Esophagus muscularis mucosa (tissue), 4 donors: ENCODE measurements at regions of chr4 and their contacts with region 1.

Region 1: DNA sequence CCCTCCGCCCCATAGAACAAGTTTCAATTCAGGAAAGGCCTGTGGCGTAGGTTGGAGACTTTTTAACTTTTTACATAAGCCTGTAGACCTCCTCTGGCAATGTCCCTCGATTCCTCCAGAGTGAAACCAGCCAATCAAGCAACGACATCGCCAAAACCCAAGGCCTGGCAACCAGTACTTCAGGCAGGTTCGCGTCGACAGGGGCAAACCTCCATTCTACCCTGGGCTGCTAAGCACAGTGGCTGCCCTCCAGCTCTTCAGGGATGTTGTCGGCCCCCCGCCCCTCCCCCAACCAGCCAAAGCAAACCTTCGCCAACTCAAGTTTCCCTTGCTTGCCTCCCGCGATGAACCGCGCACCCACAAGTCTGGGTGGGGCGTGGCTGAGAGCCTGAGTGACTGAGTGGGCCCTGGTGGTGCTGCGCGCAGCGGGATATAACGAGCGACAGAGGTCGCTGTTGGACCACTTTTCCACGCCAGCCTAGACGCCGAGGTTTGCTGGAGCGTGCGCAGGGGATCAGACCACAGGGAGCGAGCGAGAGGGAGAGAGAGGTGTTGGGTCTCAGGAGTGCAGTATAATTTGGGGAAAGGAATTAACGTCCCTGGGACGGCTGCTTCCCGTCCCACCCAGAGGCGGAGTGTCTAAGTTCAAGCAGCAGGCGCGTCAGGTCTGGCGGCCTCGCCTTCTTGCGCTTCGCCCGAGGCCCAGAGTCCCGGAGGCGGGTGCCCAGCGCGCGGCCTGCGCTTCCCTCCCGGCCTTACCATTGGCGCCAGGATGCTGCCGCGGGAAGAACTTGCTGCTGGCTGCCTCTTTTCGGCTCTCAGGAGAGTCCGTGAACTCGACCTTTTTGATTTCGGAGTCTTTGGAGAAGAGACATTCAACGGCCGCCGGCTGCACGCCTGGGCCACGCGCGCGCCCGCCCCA is 9.0 kb upstream of the PITX2 start:
- DNase-seq: no peak
- H3K4me3 ChIP-seq: peak overlapping the region; percentile 41 to 62 (median 48)
- H3K27ac ChIP-seq: peak overlapping the region; percentile 87 to 91 (median 90)
- H3K4me1 ChIP-seq: peaks cover 23 to 40% (median 32%) of the 10 kb centered on the region in 4 donors
- H3K27me3 ChIP-seq: peaks cover 0 to 84% (median 13%) of the 10 kb centered on the region in 4 donors
- CTCF ChIP-seq: peak; percentile 78 to 84 (median 80)
- EP300 ChIP-seq: no peak
- POLR2A ChIP-seq: no peak

Region 2: GRCh38 chr4:110710070-110710469 is 78.2 kb after region 1 on chr4:
- intact Hi-C with region 1: no loop called
- DNase-seq: no peak
- H3K4me3 ChIP-seq: no peak overlapping the region
- H3K27ac ChIP-seq: no peak overlapping the region
- H3K4me1 ChIP-seq: no peaks in the 10 kb centered on the region
- H3K27me3 ChIP-seq: no peaks in the 10 kb centered on the region
- CTCF ChIP-seq: no peak
- EP300 ChIP-seq: no peak
- POLR2A ChIP-seq: no peak

Region 3: GRCh38 chr4:110970642-110971041 is 338.8 kb after region 1 on chr4:
- intact Hi-C with region 1: loop called (anchors 5 kb)
- DNase-seq: no peak
- H3K4me3 ChIP-seq: no peak overlapping the region
- H3K27ac ChIP-seq: no peak overlapping the region
- H3K4me1 ChIP-seq: no peaks in the 10 kb centered on the region
- H3K27me3 ChIP-seq: no peaks in the 10 kb centered on the region
- CTCF ChIP-seq: peak in 2 of 3 experiments; percentile 29 to 42
- EP300 ChIP-seq: no peak
- POLR2A ChIP-seq: no peak

Region 4: GRCh38 chr4:111283061-111283677 is 651.3 kb after region 1 on chr4:
- intact Hi-C with region 1: loop called (anchors 5 kb)
- DNase-seq: no peak
- H3K4me3 ChIP-seq: no peak overlapping the region
- H3K27ac ChIP-seq: no peak overlapping the region
- H3K4me1 ChIP-seq: no peaks in the 10 kb centered on the region
- H3K27me3 ChIP-seq: no peaks in the 10 kb centered on the region
- CTCF ChIP-seq: peak; percentile 69 to 88 (median 75)
- EP300 ChIP-seq: no peak
- POLR2A ChIP-seq: no peak

Region 5: DNA sequence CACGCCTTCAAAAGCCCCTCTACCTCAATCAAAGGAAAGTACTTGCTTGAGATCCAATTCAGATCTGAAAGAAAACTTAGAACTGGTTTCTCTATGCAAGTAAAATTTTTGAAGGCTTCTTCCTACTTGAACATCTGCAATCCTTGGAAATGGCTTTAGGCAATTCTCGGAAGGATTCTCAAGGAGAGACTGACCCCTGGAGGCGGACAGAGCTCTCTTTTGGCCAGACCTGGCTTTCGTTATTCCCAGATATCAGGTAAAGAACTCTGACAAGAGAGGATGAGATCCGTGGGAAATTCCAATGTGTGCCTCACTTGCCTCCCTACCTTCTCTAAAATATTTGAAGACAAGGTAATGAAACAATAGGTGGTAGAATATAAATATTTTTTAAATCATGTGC is 843.2 kb after region 1 on chr4:
- intact Hi-C with region 1: loop called (anchors 10 kb)
- DNase-seq: no peak
- H3K4me3 ChIP-seq: no peak overlapping the region
- H3K27ac ChIP-seq: no peak overlapping the region
- H3K4me1 ChIP-seq: no peaks in the 10 kb centered on the region
- H3K27me3 ChIP-seq: no peaks in the 10 kb centered on the region
- CTCF ChIP-seq: peak; percentile 52 to 65 (median 56)
- EP300 ChIP-seq: no peak
- POLR2A ChIP-seq: no peak